ENCODE measurements at regions of chr6 and their contacts with region 1.

Region 1: DNA sequence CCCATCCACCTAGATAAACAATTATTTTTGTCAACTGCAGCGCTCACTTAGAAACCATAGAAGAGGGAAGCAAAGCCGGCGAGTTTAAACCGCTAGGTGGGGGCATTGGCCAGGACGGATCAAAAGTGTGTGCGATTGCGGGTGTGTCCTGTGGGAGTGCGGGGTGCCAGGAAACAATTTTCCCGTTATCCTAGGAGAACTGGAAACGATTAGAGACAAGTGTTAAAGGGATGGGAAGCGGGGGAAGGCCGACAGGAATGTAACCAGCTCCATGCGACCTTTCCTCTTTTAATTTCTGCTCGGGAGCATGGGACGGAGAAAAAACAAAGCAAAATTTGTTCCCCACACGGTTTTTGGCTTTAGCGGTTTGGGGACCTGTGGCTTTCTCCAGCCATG is 2.8 kb upstream of the HTR1B start:
- DNase-seq: peak; percentile 71
- ATAC-seq: peak; percentile 25
- H3K4me3 Mint-ChIP-seq: peak overlapping the region; percentile 93
- H3K27ac Mint-ChIP-seq: no peak overlapping the region
- H3K4me1 Mint-ChIP-seq: peaks cover 28% of the 10 kb centered on the region
- H3K27me3 Mint-ChIP-seq: peaks cover 82% of the 10 kb centered on the region
- CTCF ChIP-seq: no peak

Region 2: DNA sequence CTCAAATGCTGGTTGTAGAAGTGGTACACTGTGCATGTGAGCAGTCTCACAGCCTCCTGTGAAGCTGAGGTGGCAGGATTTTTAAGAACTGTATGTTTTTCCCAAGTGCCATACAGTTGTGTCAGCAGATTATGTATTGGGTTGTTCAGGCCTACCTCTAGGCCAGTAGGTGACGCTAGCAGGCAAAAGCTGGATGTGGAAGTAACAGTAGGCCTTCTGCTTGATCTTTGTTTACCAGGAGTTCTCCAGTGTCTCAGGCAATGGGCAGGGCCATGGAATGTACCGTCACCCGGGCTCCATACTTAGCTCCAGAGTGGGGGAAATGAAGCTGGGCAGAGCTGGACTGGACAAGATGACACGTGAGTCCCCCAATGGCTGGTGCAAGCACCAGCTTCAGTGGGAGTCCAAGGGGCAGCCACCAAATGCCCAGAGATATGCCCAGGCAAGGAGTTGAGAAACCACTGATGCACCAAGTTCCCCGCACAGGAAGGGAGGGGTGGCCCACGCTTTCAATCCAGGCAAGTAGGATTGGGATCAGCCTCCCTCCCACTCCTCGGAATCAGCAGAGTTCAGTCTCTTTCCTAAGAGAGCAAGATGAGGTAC is 292.5 kb before region 1 on chr6:
- CTCF ChIA-PET with region 1: interaction called, 13 read pairs
- POLR2A ChIA-PET with region 1: no interaction called
- DNase-seq: peak; percentile 50
- ATAC-seq: peak; percentile 99
- H3K4me3 Mint-ChIP-seq: no peak overlapping the region
- H3K27ac Mint-ChIP-seq: peak overlapping the region; percentile 7; the same call in 1 of the 2 replicates
- H3K4me1 Mint-ChIP-seq: 0 out of 2 replicates have a peak, but pooled peaks cover 2% of the 10 kb centered on the region
- H3K27me3 Mint-ChIP-seq: no peaks in the 10 kb centered on the region
- CTCF ChIP-seq: peak; percentile 35; the same call in 1 of the 2 replicates

Region 3: GRCh38 chr6:77511860-77512259 is 45.8 kb after region 1 on chr6:
- CTCF ChIA-PET with region 1: no interaction called
- POLR2A ChIA-PET with region 1: no interaction called
- DNase-seq: no peak
- ATAC-seq: no peak
- H3K4me3 Mint-ChIP-seq: no peak overlapping the region
- H3K27ac Mint-ChIP-seq: no peak overlapping the region
- H3K4me1 Mint-ChIP-seq: peaks cover 8% of the 10 kb centered on the region
- H3K27me3 Mint-ChIP-seq: peaks cover 2% of the 10 kb centered on the region
- CTCF ChIP-seq: no peak

Region 4: DNA sequence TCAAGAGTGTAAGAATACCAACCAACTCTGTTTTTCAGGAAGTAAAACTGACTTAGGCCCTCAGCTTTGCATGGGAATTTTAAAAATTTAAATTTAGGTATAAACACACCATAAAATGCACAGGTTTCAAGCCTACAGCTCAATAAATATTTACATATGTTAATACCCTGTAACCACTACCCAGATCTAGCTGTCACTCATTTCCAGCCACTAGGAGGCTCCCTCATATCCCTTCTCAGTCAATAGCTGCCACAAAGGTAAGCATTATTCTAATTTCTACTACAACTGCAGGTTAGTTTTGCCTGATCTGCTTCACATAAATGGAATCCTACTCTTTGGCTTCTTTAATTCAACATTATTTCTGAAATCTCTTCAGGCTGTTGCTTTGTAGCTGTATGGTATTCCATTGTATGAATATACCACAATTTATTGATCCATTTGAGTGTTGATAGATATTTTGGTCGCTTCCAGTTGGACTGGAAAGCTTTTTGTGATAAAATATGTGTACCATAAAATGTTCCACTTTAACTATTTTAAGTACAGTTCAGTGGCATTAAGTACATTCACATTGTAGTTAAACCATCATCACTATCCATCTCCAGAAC is 154.3 kb after region 1 on chr6:
- CTCF ChIA-PET with region 1: interaction called, 13 read pairs
- POLR2A ChIA-PET with region 1: no interaction called
- DNase-seq: peak; percentile 34
- ATAC-seq: peak; percentile 92
- H3K4me3 Mint-ChIP-seq: no peak overlapping the region
- H3K27ac Mint-ChIP-seq: no peak overlapping the region
- H3K4me1 Mint-ChIP-seq: peaks cover 15% of the 10 kb centered on the region
- H3K27me3 Mint-ChIP-seq: no peaks in the 10 kb centered on the region
- CTCF ChIP-seq: peak; percentile 40; the same call in 1 of the 2 replicates

Measured in WTC11 (cell line).